ENCODE measurements at regions of chr11 and their contacts with region 1.

Region 1: DNA sequence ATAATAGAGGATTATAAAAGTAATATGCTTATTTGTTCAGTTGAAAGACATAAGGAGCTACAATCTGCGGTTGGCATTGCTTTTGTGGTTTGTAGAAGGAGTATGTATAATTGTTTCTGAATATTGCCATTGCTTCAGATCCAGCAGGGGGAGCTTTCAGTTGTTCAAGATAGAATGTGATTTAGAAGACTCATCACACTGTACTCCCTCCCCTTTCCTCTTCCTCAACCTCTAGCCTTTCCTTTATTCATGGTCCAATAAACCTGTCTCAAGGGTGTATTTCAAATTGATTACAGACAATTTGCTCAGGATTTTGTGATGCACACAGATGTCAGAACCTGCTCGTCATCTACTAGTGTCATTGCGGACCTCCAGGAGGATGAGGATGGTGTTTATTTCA is 9.8 kb downstream of the PRMT3 start:
- DNase-seq: no peak
- H3K4me3 ChIP-seq: no peak overlapping the region
- H3K27ac ChIP-seq: no peak overlapping the region
- H3K4me1 ChIP-seq: peaks cover 0 to 7% (median 0%) of the 10 kb centered on the region in 6 donors
- H3K27me3 ChIP-seq: no peaks in the 10 kb centered on the region
- CTCF ChIP-seq: peak in 7 of 11 experiments; percentile 10 to 40 (median 36)
- POLR2A ChIP-seq: no peak

Region 2: GRCh38 chr11:20599221-20600019 is 202.1 kb after region 1 on chr11 and contains the start of gene SLC6A5:
- intact Hi-C with region 1: no loop called
- DNase-seq: no peak
- H3K4me3 ChIP-seq: no peak within 1 kb of the TSS
- H3K27ac ChIP-seq: no peak within 1 kb of the TSS
- H3K4me1 ChIP-seq: peaks cover 0 to 10% (median 4%) of the 10 kb centered on the region in 6 donors
- H3K27me3 ChIP-seq: peaks cover 7 to 100% (median 95%) of the 10 kb centered on the region in 7 donors
- CTCF ChIP-seq: no peak
- POLR2A ChIP-seq: no peak
- total RNA-seq, gene SLC6A5: not detected

Region 3: DNA sequence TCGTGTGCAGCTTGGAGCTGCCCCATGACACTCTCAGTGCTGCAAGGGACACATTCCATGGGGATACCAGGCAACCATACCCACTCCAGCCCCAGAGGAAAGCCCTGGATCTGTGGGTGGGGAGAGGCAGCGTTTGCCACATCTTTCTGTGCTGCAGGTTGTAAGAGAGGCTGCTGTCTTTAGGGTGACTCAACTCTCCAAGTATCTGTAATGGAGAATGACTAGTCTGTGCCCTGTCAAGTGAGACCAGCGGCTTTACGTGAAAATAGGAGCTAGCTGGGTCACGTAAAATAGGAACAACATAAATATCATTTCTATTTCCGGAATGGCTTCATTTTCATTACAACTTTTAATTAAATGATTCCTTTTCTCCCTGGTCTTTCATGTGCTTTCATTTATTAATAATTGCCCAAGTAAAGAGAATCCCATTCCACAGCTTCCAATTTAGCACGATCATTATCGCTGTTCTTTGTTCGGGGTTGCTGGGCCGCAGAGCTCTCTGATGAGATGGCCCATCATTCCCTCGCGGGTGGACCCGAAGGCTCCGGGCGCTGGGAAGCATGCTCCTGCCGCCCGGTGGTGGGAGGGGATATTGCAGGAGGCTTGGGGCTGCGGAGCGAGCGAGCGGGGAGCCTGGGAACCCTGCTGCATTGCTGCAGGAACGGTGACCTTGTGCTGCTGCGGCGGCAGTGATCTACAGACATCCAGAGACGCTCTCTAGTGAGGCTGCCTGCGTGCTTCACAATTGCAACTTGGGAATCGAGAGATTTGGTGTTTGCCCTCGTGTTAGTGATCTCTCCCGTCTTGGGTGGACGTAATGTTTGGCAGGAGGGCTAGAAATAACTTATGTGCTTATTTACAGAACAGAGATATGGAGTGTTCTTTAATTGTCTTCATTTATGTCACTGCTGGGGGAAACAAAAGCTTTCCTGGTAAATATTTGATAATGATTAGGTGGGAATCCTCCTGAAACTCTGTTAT is 212.7 kb after region 1 on chr11:
- intact Hi-C with region 1: loop called (anchors 10 kb)
- DNase-seq: peak; percentile 86
- H3K4me3 ChIP-seq: peak overlapping the region in 1 of 8 donors; percentile 21
- H3K27ac ChIP-seq: no peak overlapping the region
- H3K4me1 ChIP-seq: peaks cover 0 to 16% (median 6%) of the 10 kb centered on the region in 6 donors
- H3K27me3 ChIP-seq: peaks cover 0 to 99% (median 22%) of the 10 kb centered on the region in 7 donors
- CTCF ChIP-seq: peak; percentile 58 to 90 (median 82)
- POLR2A ChIP-seq: no peak